Right ventricle myocardium inferior (tissue), 1 donor: ENCODE measurements at regions of chr11 and their contacts with region 1.

Region 1: DNA sequence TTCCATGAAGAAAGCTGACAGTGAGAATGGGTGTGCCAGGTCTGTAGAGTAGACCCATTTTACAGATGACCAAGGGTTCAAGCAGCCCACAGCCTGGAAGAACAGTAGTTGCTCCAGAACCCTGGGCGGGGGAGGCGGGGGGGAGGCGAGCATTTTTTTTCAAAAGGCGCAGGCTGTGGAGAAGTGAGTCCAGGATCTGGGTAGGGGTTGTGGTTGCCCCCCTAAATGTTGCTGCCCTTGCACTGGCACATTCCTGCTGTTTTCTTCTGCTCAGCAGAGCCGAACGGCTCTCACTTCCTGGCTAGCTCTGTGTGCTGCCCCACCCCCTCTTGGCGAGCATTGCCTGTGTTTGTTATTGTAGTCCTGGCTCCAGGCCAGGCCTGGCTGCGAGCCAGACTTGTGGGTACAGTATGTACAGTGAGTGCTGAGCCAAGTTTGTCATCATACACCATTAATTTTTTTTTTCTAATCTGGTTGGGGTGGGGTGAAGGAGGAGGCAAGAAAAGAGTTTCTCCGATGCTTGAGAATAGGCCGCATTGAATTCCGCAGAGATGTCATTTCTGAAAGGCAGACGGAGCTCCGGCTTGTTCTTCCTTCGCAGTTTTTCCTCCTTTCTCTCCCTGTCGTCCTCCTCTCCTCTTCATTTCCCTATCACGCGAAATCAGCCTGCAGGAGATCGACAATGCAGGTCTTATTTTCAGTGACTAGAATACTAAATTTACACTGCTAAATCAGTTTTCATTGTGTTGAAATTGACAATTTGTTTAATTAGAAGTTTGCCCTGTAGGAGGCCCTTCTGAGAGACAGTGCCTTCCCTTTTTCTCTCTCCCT is 100.5 kb downstream of the ZBTB16 start:
- DNase-seq: peak; percentile 100
- ATAC-seq: peak; percentile 55

Region 2: GRCh38 chr11:113705871-113706655 is 454.0 kb before region 1 on chr11 and contains the start of gene TMPRSS5:
- intact Hi-C with region 1: no loop called
- DNase-seq: no peak
- ATAC-seq: no peak
- total RNA-seq, gene TMPRSS5: 0.38 TPM

Region 3: GRCh38 chr11:114110952-114111947 is 48.8 kb before region 1 on chr11:
- intact Hi-C with region 1: loop called (anchors 5 kb)
- DNase-seq: no peak
- ATAC-seq: peak; percentile 38

Region 4: DNA sequence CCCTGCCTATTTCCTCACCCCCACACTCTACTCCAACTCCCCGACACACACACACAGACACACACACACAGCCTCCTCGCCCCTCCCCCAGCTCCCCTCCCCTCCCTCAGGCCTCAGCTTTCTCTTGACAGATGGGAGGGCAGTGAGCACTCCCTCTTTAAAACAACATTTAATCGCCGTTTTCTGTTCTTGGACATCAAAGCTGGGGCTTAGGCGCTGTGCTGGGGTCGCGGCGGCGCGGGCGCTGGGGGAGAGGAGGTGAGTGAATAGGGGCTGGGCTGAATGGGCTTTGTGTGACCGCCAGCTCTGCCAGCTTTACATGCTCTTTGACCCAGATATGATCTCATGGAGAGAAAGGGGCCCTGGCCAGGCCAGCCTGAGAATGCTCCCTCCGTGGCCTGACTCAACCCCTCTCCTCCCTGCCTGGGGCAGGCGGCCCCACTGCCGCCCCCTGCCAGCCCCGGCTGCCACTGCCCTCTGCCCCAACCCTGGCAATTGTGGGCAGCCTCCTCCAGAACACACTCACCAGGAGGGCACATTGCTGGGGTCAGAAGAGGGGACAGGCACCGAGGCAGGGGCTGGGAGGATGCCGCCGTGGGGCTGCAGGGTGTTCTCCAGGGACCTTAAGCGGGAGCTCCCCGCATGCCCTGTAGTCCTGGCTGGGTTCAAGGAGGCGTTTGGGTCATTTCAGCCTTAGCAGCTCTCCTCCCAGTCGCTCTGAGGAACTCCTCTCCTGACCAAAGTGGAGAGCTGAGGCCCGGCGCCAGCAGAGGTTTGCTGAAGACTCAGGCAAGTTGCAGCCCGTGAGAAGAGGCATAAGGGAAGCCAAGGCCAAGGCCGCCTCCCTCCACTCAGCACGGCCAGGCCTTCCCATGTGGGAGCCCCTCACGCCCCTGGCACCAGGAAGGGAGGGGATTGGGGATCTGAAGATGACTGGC is 97.9 kb after region 1 on chr11:
- intact Hi-C with region 1: loop called (anchors 2 kb)
- DNase-seq: peak; percentile 90
- ATAC-seq: peak; percentile 37

Region 5: GRCh38 chr11:114909866-114910265 is 749.8 kb after region 1 on chr11:
- intact Hi-C with region 1: no loop called
- DNase-seq: no peak
- ATAC-seq: no peak